Activated T-helper 2 cell treated with anti-CD3 and anti-CD28 coated beads, Interferon-gamma antibody, Interleukin-2, Interleukin-4, amounts not matched to agents 10 μg/mL and 5 μg/mL and 100 μg/mL, durations not matched to agents 14 hours and 24 hours and 36 hours (primary cell): ENCODE measurements at regions of chr9 and their contacts with region 1.

Region 1: GRCh38 chr9:5364294-5365024 is 24.8 kb upstream of the RLN1 start:
- DNase-seq: no peak
- H3K4me3 Mint-ChIP-seq: no peak overlapping the region
- H3K27ac Mint-ChIP-seq: peak overlapping the region; percentile 6
- H3K4me1 Mint-ChIP-seq: peaks cover 17% of the 10 kb centered on the region
- H3K27me3 Mint-ChIP-seq: no peaks in the 10 kb centered on the region

Region 2: GRCh38 chr9:5375091-5375490 is 10.6 kb after region 1 on chr9:
- intact Hi-C with region 1: loop called (anchors 1 kb)
- DNase-seq: no peak
- H3K4me3 Mint-ChIP-seq: no peak overlapping the region
- H3K27ac Mint-ChIP-seq: peak overlapping the region; percentile 9
- H3K4me1 Mint-ChIP-seq: peaks cover 17% of the 10 kb centered on the region
- H3K27me3 Mint-ChIP-seq: no peaks in the 10 kb centered on the region

Region 3: DNA sequence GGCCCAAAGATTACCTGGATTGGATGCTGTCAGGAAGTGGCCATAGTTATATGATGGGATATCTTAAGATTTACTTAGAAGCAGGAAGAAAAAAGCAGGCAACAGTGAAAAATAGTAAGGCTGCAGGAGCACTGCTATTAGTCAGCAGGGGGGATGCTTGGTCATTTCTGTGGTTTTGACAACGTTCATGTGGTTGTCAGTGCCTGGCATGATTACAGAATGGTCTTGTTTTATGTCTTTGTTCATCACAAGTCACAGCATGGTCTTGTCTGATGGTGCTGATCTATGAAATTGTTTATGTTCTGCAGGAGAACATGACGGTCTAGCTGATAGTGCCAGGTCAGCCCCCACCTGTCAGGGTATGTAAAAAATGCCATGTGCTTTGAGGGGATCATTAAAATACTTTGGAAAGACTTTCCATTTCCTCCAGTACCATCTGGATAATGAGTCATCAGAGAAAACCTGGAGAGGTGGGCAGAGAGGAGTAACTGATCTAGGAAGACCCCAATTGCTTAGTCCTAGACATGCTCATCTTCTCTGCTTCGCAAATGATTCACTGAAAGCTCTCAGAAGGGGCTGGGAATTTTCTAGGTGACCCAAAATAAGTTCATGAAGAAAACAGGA is 24.8 kb after region 1 on chr9:
- intact Hi-C with region 1: loop called (anchors 1 kb)
- DNase-seq: no peak
- H3K4me3 Mint-ChIP-seq: no peak overlapping the region
- H3K27ac Mint-ChIP-seq: no peak overlapping the region
- H3K4me1 Mint-ChIP-seq: peaks cover 42% of the 10 kb centered on the region
- H3K27me3 Mint-ChIP-seq: no peaks in the 10 kb centered on the region

Region 4: DNA sequence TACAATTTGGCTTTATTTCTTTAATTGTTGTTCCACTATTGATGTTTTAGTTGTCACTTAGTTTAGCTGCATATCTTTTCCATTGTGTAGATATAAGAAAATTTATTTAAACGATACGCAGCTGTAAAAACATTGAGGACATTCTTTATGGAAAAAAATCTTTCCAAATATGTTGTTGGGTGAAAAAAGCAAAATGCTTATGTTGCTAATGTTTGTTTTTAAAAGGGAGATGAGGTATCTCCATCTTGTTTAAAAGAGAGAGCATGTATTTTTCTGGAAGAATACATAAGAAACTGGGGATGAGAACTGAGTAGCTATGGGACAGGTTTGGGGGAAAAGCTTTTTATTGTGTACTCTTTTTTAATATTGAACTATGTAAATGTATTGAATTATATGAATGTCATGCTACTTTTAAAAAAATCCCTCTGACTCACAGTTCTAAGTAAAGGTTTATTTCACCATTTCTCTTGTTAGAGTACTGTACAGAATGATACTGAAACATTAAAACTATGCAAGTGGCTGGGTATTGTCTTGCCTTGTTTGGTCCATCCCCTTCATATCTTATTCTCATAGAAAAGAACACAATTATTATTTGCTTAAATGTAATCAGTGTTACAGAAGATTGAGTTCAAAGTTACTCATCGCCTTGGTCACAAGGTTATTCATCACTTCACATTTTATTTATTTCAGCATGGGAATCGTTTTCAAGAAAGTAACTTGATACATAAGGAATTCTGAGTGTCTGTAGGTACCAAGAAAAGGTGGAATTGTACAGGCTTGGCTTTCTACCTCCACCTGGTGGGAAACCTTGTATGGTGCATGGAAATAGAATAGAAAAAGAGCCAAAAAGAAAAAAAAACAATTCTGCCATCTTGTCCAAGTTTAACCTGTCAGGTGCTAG is 350.3 kb after region 1 on chr9:
- intact Hi-C with region 1: no loop called
- DNase-seq: no peak
- H3K4me3 Mint-ChIP-seq: no peak overlapping the region
- H3K27ac Mint-ChIP-seq: no peak overlapping the region
- H3K4me1 Mint-ChIP-seq: peaks cover 10% of the 10 kb centered on the region
- H3K27me3 Mint-ChIP-seq: no peaks in the 10 kb centered on the region

Region 5: DNA sequence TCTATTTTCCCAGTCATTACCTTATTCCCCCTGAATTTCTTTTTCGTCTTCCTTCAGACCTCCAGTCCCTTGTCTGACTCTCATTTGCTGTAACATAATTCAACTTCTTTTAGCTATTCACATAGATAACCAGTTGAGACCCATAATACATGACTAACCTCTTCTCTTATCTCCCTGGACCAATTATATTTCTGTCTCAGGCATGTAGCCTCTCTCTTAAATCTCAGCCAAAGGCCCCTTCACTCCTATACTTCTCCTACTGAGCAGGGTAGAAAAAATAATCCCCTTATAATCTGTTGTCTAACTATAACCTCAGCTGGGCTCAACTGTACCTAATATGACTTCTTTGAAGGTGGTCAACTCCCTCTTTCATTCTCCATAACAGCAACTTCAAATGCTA is 630.0 kb after region 1 on chr9:
- intact Hi-C with region 1: no loop called
- DNase-seq: no peak
- H3K4me3 Mint-ChIP-seq: no peak overlapping the region
- H3K27ac Mint-ChIP-seq: no peak overlapping the region
- H3K4me1 Mint-ChIP-seq: peaks cover 14% of the 10 kb centered on the region
- H3K27me3 Mint-ChIP-seq: no peaks in the 10 kb centered on the region